MCF 10A (cell line): ENCODE measurements at regions of chr7 and their contacts with region 1.

Region 1: DNA sequence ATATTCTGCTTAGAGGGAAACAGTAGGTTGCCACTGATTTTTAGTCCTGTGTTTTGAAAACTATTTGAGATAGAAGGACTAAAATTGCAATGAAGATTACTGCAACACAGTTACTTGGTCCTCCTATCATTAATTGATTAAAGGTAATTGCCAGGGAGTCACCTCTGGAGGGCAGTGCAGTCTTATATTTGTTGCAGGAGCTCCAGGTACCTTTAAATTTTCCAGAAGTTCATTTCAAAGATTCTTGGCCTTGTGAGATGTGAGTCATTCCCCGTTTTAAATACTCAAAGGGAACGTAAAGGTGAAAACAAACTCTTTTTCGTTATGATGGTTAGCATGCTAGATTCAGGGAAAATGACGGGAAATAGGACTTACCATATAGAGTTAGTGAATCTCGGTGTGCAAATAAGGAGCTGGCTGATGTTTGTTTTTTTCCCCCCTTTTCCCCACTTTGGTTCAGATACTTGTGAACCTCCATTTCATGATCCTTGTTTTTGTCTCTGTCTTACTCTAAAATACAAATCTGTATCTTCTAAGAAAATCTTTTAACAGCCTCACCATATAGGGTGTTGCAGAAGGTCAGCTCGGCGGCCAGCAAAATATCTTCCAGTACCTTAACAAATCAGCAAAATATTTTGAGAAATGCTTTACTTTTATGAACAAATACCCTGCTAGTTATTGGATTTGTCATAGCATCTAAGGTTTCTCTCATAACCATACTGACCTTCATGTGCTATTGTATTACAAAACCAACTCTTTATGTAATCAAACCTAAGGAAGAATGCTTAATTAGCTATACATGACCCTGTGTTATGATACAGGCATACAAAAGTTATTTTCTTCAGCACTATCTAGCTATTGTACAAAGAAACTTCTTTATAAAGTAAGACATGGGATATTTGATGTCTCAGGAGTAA is 143.0 kb upstream of the HDAC9 start:
- DNase-seq: peak; percentile 74
- H3K4me3 Mint-ChIP-seq: peak overlapping the region; percentile 39
- H3K27ac Mint-ChIP-seq: no peak overlapping the region
- H3K4me1 Mint-ChIP-seq: peaks cover 5% of the 10 kb centered on the region
- H3K27me3 Mint-ChIP-seq: no peaks in the 10 kb centered on the region
- CTCF ChIP-seq: peak; percentile 69

Region 2: GRCh38 chr7:17696443-17696842 is 656.2 kb before region 1 on chr7:
- CTCF ChIA-PET with region 1: interaction called, 10 read pairs
- POLR2A ChIA-PET with region 1: no interaction called
- intact Hi-C with region 1: no loop called
- DNase-seq: peak; percentile 99
- H3K4me3 Mint-ChIP-seq: no peak overlapping the region
- H3K27ac Mint-ChIP-seq: peak overlapping the region; percentile 89
- H3K4me1 Mint-ChIP-seq: peaks cover 20% of the 10 kb centered on the region
- H3K27me3 Mint-ChIP-seq: no peaks in the 10 kb centered on the region
- CTCF ChIP-seq: no peak

Region 3: DNA sequence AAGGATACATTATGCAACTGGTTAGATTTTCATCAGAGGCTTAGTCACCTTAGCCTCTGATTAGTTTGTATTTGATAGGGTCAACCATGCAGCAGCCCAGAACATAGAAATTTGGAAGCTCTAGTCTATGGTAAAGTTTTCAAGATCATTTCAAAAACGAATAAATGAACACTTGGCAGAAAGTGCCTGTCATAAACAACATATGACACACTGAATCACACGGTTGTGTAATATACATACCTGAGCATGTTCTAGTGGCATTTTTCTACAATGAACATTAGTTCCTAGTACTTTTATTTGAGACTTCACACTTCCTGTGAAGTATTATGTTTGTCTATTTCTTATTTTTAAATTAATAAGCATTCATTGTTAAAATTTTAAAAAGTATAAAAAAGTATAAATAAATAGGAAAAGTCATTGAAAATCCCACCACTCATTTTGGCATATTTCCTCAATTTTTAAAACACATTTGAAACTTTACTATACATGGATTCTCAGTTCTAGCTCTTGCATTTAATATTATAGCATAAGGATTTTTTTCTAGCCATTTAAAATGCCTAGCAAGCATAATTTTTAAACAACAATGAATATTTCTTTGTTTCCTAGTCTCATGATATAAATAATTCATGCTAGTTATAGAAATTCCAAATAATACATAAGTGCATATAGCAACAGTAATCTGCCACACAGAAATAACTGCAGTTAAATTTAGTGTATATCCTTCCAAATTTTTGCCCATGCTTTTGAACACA is 299.2 kb before region 1 on chr7:
- CTCF ChIA-PET with region 1: no interaction called
- POLR2A ChIA-PET with region 1: no interaction called
- intact Hi-C with region 1: no loop called
- DNase-seq: peak; percentile 37
- H3K4me3 Mint-ChIP-seq: no peak overlapping the region
- H3K27ac Mint-ChIP-seq: no peak overlapping the region
- H3K4me1 Mint-ChIP-seq: peaks cover 6% of the 10 kb centered on the region
- H3K27me3 Mint-ChIP-seq: no peaks in the 10 kb centered on the region
- CTCF ChIP-seq: no peak

Region 4: DNA sequence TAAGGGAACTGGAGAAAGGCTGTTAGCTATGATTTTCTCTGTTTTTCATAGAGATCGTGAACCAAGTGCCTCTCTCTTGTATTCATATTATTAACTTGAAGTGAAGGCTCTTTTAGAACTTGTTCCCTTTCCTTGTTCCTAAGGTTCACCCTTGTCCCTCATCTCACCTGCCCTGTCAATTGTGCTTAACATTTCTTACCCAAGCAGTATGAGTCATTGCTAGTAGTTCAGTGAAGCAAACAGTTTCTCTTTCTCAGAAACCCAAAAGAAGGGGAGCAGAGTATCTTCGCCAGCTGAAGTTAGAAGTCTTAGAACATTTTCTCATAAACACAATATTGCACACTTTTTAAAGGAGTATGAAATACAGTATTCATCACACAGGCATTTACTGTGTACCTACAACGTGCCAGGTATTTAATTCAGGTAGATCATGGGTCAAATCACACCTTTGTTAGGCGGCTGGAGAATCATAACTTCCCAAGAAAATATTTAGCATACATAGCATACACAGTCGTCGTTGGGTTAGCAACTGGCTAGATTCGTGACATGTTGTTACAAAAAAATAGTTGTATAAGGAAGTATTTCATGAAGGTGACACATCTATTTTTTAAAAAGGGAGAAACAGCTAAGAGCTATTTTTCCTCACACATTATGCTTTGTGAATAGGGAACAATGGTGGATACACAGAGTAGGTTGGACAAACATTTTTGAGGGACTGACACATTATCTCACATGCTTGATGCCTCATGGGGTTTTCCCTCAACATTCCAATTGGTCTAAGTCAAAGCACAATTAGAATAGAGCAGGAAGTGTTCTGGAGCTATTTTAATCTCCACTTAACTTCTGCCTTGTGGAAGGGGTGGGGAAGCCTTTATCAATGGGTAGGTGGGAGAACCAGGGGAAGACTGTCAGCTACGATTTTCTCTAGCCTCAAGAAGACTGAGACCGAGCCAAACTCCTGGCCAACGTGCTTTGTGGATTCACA is 156.1 kb after region 1 on chr7:
- CTCF ChIA-PET with region 1: interaction called, 8 read pairs
- POLR2A ChIA-PET with region 1: interaction called, 8 read pairs
- intact Hi-C with region 1: loop called (anchors 2 kb)
- DNase-seq: peak; percentile 87
- H3K4me3 Mint-ChIP-seq: peak overlapping the region; percentile 71
- H3K27ac Mint-ChIP-seq: peak overlapping the region; percentile 100
- H3K4me1 Mint-ChIP-seq: peaks cover 28% of the 10 kb centered on the region
- H3K27me3 Mint-ChIP-seq: no peaks in the 10 kb centered on the region
- CTCF ChIP-seq: no peak

Region 5: DNA sequence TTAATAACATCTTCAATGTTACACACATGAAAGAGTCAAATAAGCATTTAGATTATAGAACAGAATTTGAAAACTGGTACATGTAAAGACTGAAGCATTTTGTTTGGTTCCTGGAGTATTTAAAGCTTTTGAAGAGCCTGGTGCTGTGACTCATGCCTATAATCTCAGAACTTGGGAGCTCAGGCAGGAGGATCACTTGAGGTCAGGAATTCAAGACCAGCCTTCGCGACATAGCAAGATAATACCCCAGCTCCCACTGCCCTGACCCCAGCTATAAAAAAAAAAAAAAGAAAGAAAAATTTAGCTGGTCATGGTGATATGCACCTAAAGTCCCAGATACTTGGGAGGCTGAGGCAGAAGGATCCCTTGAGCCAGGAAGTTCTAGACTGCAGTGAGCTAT is 230.7 kb after region 1 on chr7:
- CTCF ChIA-PET with region 1: interaction called, 13 read pairs
- POLR2A ChIA-PET with region 1: no interaction called
- intact Hi-C with region 1: no loop called
- DNase-seq: no peak
- H3K4me3 Mint-ChIP-seq: no peak overlapping the region
- H3K27ac Mint-ChIP-seq: no peak overlapping the region
- H3K4me1 Mint-ChIP-seq: no peaks in the 10 kb centered on the region
- H3K27me3 Mint-ChIP-seq: no peaks in the 10 kb centered on the region
- CTCF ChIP-seq: no peak

Region 6: GRCh38 chr7:18666107-18666728 is 313.6 kb after region 1 on chr7:
- CTCF ChIA-PET with region 1: interaction called, 12 read pairs
- POLR2A ChIA-PET with region 1: interaction called, 5 read pairs
- intact Hi-C with region 1: loop called (anchors 1 kb)
- DNase-seq: peak; percentile 80
- H3K4me3 Mint-ChIP-seq: no peak overlapping the region
- H3K27ac Mint-ChIP-seq: no peak overlapping the region
- H3K4me1 Mint-ChIP-seq: peaks cover under 1% of the 10 kb centered on the region
- H3K27me3 Mint-ChIP-seq: no peaks in the 10 kb centered on the region
- CTCF ChIP-seq: peak; percentile 71

Region 7: DNA sequence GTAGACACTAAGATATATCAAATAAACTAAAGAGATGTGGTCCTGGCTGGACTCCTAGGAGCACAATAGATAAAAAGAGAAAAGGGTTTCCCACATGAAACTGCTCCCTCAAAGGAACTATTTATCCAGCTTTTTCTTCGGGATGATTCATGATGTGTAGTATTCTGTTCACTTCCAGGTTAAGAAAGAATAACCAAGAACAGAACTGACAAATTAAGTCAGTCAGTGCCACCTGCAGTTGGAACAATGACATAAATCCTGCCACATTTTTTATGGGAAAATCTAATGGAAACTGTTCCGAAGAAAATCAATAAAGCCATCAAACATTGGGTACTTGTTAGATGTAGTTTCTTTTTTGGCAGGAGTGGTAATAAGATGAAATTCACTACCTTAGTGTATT is 1269.1 kb after region 1 on chr7:
- CTCF ChIA-PET with region 1: interaction called, 3 read pairs
- POLR2A ChIA-PET with region 1: no interaction called
- intact Hi-C with region 1: loop called (anchors 5 kb)
- DNase-seq: peak; percentile 67
- H3K4me3 Mint-ChIP-seq: no peak overlapping the region
- H3K27ac Mint-ChIP-seq: peak overlapping the region; percentile 89
- H3K4me1 Mint-ChIP-seq: peaks cover 33% of the 10 kb centered on the region
- H3K27me3 Mint-ChIP-seq: no peaks in the 10 kb centered on the region
- CTCF ChIP-seq: peak; percentile 34